ENCODE measurements at regions of chr6 and their contacts with region 1.

Region 1: GRCh38 chr6:52543729-52544601 is 32.9 kb downstream of the TRAM2 start:
- DNase-seq: peak; percentile 87
- ATAC-seq: peak; percentile 66
- H3K4me3 ChIP-seq: peak overlapping the region; percentile 1 to 31 (median 30); a peak in 5 of 6 replicates
- H3K27ac ChIP-seq: peak overlapping the region; percentile 77
- H3K4me1 ChIP-seq: peaks cover 100% of the 10 kb centered on the region
- H3K27me3 ChIP-seq: no peaks in the 10 kb centered on the region
- CTCF ChIP-seq: no peak
- EP300 ChIP-seq: peak in 1 of 2 experiments; percentile 93; a peak in 2 of 4 replicates
- POLR2A ChIP-seq: 0 out of 4 replicates have a peak, but pooled peaks of 1 of the 2 experiments have one; percentile 24
- RAD21 ChIP-seq: no peak

Region 2: DNA sequence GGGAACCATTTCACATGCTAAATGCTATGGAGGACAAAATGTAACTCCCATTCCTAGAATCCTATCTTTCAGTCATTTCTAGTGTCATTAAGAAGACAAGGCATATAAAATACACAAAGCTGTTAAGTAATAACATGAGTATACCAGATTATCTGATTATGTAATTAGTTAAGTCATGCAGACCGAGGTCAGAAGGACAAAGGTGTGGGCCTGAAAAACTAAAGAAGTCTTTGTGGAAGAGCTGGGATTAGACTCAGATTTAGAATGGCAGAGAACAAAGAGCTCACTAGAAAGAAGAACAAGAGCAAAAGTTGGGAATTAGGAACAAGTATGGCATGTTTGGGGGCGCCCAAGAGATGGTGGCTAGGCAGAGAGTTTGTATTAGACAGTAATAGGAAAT is 86.9 kb before region 1 on chr6:
- CTCF ChIA-PET with region 1: no interaction called
- POLR2A ChIA-PET with region 1: no interaction called
- in situ Hi-C with region 1: no loop called
- intact Hi-C with region 1: no loop called
- DNase-seq: peak; percentile 20
- ATAC-seq: no peak
- H3K4me3 ChIP-seq: no peak overlapping the region
- H3K27ac ChIP-seq: no peak overlapping the region
- H3K4me1 ChIP-seq: no peaks in the 10 kb centered on the region; the same call in 1 of the 2 replicates
- H3K27me3 ChIP-seq: no peaks in the 10 kb centered on the region
- CTCF ChIP-seq: no peak
- EP300 ChIP-seq: no peak
- POLR2A ChIP-seq: no peak
- RAD21 ChIP-seq: no peak

Region 3: DNA sequence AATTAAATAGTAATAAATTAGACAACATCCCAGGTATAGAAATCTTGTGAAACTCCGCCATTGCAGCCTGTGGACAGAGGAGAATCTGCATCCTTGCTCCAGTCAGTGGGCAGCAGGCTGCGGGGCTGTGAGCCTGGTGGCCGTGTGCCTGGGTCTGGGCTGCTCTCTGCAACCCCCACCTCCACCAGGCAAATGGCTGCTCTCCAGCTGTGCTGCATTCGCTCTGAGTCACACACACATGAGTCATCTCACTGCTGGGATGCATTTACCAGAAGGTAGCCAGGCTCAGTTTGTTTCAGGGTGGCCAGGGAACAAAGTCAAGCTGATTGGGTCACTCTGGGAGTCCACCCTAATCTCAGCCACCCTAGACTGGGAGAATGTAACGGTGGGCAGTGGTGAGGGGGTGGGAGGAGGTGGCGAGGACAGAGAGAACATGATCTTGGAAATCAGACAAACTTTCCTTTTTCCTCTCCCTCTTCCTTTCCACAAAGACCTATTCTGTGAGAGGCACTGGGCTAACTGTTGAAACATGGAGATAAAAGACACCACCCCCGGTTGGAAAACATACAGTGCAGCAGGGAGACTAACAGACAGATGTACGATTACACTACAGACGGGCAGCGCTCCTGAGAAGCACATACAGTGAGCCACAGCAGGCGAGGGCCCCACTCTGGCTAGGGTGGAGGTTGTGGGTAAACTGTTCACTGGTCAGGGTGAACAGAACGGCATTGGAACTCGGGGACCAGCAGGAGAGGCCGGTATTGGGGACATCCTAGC is 26.3 kb before region 1 on chr6:
- CTCF ChIA-PET with region 1: no interaction called
- POLR2A ChIA-PET with region 1: interaction called, 22 read pairs
- in situ Hi-C with region 1: no loop called
- intact Hi-C with region 1: loop called (anchors 1 kb)
- DNase-seq: peak; percentile 92
- ATAC-seq: peak; percentile 92
- H3K4me3 ChIP-seq: peak overlapping the region; percentile 10 to 52 (median 26); a peak in 5 of 6 replicates
- H3K27ac ChIP-seq: peak overlapping the region; percentile 73
- H3K4me1 ChIP-seq: peaks cover 74% of the 10 kb centered on the region
- H3K27me3 ChIP-seq: no peaks in the 10 kb centered on the region
- CTCF ChIP-seq: peak; percentile 26; the same call in 1 of the 2 replicates
- EP300 ChIP-seq: peak in 1 of 2 experiments; percentile 64; a peak in 2 of 4 replicates
- POLR2A ChIP-seq: peak; percentile 40 to 44; a peak in 1 of 4 replicates
- RAD21 ChIP-seq: no peak

Region 4: GRCh38 chr6:52566853-52567279 is 22.9 kb after region 1 on chr6:
- CTCF ChIA-PET with region 1: no interaction called
- POLR2A ChIA-PET with region 1: interaction called, 10 read pairs
- in situ Hi-C with region 1: no loop called
- intact Hi-C with region 1: no loop called
- DNase-seq: peak; percentile 58
- ATAC-seq: peak; percentile 63
- H3K4me3 ChIP-seq: no peak overlapping the region
- H3K27ac ChIP-seq: no peak overlapping the region
- H3K4me1 ChIP-seq: peaks cover 97% of the 10 kb centered on the region
- H3K27me3 ChIP-seq: no peaks in the 10 kb centered on the region
- CTCF ChIP-seq: no peak
- EP300 ChIP-seq: 0 out of 4 replicates have a peak, but pooled peaks of 1 of the 2 experiments have one; percentile 17
- POLR2A ChIP-seq: no peak
- RAD21 ChIP-seq: no peak

Region 5: GRCh38 chr6:52590152-52590931 is 46.4 kb after region 1 on chr6:
- CTCF ChIA-PET with region 1: no interaction called
- POLR2A ChIA-PET with region 1: interaction called, 28 read pairs
- in situ Hi-C with region 1: no loop called
- intact Hi-C with region 1: loop called (anchors 2 kb)
- DNase-seq: peak; percentile 77
- ATAC-seq: peak; percentile 62
- H3K4me3 ChIP-seq: peak overlapping the region in 1 of 3 experiments; percentile 33; a peak in 2 of 6 replicates
- H3K27ac ChIP-seq: peak overlapping the region; percentile 93
- H3K4me1 ChIP-seq: peaks cover 71% of the 10 kb centered on the region
- H3K27me3 ChIP-seq: no peaks in the 10 kb centered on the region
- CTCF ChIP-seq: peak; percentile 86
- EP300 ChIP-seq: peak in 1 of 2 experiments; percentile 29; a peak in 2 of 4 replicates
- POLR2A ChIP-seq: no peak
- RAD21 ChIP-seq: peak; percentile 78